ENCODE measurements at regions of chr21 and their contacts with region 1.

Region 1: DNA sequence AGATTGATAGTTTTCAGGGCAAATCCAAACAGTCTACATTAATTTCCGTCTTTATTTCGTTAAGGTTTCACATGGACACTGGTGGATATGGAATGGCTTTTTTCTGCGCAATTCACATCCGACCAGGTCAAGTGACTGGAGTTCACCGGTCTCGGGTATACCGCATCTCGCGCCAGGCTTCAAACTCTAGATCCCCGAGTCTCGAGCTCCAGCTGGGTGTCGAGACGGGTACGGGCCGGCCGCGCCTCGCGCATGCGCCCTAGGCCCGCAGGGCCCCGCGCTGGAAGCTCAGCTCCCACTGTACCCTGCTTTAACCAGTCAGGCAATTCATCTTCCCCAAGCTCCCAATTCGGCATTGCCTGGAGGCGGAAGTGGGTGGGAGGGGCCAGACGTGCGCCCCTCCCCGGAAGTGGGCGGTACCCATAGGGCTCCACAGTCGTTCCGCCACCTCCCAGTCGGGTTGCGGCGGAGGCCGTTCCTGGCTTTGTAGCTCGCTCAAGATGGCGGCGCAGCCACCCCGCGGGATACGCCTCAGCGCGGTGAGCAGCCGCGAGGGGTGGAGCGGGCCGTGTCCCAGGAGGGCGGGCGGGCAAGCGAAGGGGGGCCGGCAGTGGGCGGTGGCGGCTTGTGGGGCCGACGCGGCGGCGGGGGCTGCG is at the start of gene MORC3:
- DNase-seq: peak; percentile 98
- ATAC-seq: peak; percentile 91
- H3K4me3 Mint-ChIP-seq: peak within 1 kb of the TSS; percentile 89
- H3K27ac Mint-ChIP-seq: peak within 1 kb of the TSS; percentile 97
- H3K4me1 Mint-ChIP-seq: peaks cover 30% of the 10 kb centered on the region
- H3K27me3 Mint-ChIP-seq: no peaks in the 10 kb centered on the region
- total RNA-seq, gene MORC3: 31.6 to 35.2 TPM

Region 2: GRCh38 chr21:36141513-36141925 is 178.4 kb before region 1 on chr21:
- CTCF ChIA-PET with region 1: interaction called, 21 read pairs
- POLR2A ChIA-PET with region 1: interaction called, 3 read pairs
- DNase-seq: peak; percentile 94
- ATAC-seq: peak; percentile 92
- H3K4me3 Mint-ChIP-seq: no peak overlapping the region
- H3K27ac Mint-ChIP-seq: peak overlapping the region; percentile 63
- H3K4me1 Mint-ChIP-seq: peaks cover 44% of the 10 kb centered on the region
- H3K27me3 Mint-ChIP-seq: no peaks in the 10 kb centered on the region

Region 3: DNA sequence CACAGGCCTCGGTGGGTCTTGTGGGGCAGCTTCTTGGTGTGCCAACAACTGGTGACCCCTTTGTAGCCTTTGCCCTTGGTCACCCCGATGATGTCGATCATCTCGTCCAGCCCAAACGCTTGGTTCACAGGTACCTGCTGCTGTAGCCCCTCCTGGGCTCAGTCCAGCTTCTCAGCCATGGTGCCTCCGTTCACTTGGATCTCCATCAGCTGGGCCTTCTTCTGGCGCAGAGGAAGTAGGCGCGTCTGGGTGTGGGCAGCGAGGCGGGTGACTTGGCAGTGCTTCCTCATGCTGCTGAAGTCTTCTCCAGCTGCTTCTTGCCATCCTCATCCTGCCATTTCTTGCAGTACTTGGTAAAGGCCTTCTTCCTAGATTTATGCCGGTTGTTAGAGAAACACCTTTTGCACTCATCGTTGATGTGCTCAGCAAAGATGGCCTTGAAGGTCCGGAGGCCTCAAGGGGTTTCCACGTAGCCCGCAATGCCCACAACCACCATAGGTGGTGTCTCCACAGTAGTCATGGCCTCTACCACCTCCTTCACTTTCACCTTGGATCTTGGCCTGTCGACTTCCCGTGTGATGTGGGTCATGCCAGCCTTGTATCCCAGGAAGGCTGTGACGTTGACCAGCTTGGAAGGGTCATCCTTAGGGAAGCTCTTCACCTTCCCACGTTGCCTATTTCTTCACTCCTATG is 150.3 kb before region 1 on chr21:
- CTCF ChIA-PET with region 1: interaction called, 18 read pairs
- POLR2A ChIA-PET with region 1: interaction called, 9 read pairs
- DNase-seq: peak; percentile 28
- ATAC-seq: no peak
- H3K4me3 Mint-ChIP-seq: no peak overlapping the region
- H3K27ac Mint-ChIP-seq: no peak overlapping the region
- H3K4me1 Mint-ChIP-seq: peaks cover 14% of the 10 kb centered on the region
- H3K27me3 Mint-ChIP-seq: no peaks in the 10 kb centered on the region

Region 4: DNA sequence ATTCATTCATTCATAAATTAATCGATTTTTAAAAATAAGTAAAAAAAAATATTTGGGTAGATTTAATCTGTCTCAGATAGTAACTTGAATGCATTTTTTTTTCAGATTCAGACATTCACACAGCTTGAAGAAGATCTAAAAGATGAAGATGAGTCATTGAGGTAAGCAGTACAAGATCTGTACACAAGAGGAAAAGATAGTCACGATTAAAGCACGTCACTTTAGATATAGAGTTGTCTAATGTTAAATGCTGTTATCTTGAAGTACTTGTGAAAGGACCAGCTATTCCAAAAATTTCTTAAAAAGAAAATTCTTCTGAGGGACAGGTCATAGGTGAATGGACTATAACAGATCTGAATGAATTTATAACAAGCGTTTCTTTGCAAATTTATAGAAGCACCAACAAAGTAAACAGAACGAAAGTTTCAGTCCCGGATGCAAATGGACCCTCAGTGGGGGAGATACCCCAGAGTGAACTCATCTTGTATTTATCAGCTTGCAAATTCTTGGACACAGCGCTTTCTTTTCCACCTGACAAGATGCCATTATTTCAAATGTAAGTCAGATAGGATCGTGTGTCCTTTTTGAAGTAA is 31.1 kb before region 1 on chr21:
- CTCF ChIA-PET with region 1: interaction called, 7 read pairs
- POLR2A ChIA-PET with region 1: interaction called, 42 read pairs
- DNase-seq: no peak
- ATAC-seq: peak; percentile 64
- H3K4me3 Mint-ChIP-seq: no peak overlapping the region
- H3K27ac Mint-ChIP-seq: peak overlapping the region; percentile 40
- H3K4me1 Mint-ChIP-seq: peaks cover 15% of the 10 kb centered on the region
- H3K27me3 Mint-ChIP-seq: no peaks in the 10 kb centered on the region

Region 5: GRCh38 chr21:36330904-36331303 is 11.0 kb after region 1 on chr21:
- CTCF ChIA-PET with region 1: interaction called, 31 read pairs
- POLR2A ChIA-PET with region 1: interaction called, 7 read pairs
- DNase-seq: peak; percentile 60
- ATAC-seq: peak; percentile 88
- H3K4me3 Mint-ChIP-seq: no peak overlapping the region
- H3K27ac Mint-ChIP-seq: peak overlapping the region; percentile 4
- H3K4me1 Mint-ChIP-seq: peaks cover 31% of the 10 kb centered on the region
- H3K27me3 Mint-ChIP-seq: no peaks in the 10 kb centered on the region

Measured in activated CD8-positive, alpha-beta T cell treated with anti-CD3 and anti-CD28 coated beads, Interleukin-2, amount 10 ng/mL, durations not matched to agents 7 days and 5 days (primary cell).